Mammary epithelial cell (primary cell): ENCODE measurements at regions of chr21 and their contacts with region 1.

Region 1: GRCh38 chr21:41816220-41817165 is 49.6 kb upstream of the RIPK4 start:
- DNase-seq: peak; percentile 38
- H3K4me3 ChIP-seq: no peak overlapping the region
- H3K27ac ChIP-seq: no peak overlapping the region
- H3K4me1 ChIP-seq: peaks cover 6% of the 10 kb centered on the region
- H3K27me3 ChIP-seq: no peaks in the 10 kb centered on the region
- CTCF ChIP-seq: peak; percentile 60 to 62

Region 2: DNA sequence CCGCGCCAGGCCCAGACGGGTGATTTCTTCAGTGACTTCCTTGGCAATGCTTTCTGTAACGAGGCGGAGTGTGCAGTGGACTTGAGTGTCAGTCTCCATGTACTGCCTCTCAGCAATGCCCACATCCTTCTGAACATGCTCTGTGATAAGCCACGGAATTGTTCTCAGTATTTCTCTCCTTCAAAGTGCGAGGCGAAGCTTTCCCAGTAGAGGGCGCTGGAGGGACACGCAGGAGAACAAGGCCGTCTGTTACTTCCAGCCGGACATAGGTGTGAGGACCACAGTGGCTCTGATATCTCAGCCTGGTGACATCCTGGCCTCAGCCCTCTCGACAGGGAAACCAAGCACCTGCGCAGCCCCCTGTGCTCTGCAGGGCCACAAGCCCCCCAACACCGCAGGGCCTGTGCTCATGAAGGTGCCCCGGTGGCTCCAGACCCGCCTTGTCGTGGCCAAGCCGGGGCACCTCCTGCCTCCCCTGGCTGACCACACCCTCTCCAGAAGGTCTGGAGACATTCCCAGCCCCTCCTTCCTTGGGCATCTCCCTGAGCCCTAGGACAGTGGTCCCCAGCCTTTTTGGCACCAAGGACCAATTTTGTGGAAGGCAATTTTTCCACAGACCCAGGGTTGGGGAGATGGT is 694.6 kb before region 1 on chr21:
- CTCF ChIA-PET with region 1: no interaction called
- dilution Hi-C with region 1: no loop called
- in situ Hi-C with region 1: no loop called
- intact Hi-C with region 1: loop called (anchors 10 kb)
- DNase-seq: peak; percentile 70
- H3K4me3 ChIP-seq: no peak overlapping the region
- H3K27ac ChIP-seq: no peak overlapping the region
- H3K4me1 ChIP-seq: peaks cover 12% of the 10 kb centered on the region
- H3K27me3 ChIP-seq: no peaks in the 10 kb centered on the region
- CTCF ChIP-seq: peak; percentile 98 to 99

Region 3: GRCh38 chr21:41671859-41672532 is 144.5 kb before region 1 on chr21:
- CTCF ChIA-PET with region 1: interaction called, 13 read pairs
- dilution Hi-C with region 1: no loop called
- in situ Hi-C with region 1: no loop called
- intact Hi-C with region 1: no loop called
- DNase-seq: no peak
- H3K4me3 ChIP-seq: no peak overlapping the region
- H3K27ac ChIP-seq: no peak overlapping the region
- H3K4me1 ChIP-seq: peaks cover 23% of the 10 kb centered on the region
- H3K27me3 ChIP-seq: no peaks in the 10 kb centered on the region
- CTCF ChIP-seq: no peak

Region 4: GRCh38 chr21:41777951-41778874 is 38.3 kb before region 1 on chr21:
- CTCF ChIA-PET with region 1: interaction called, 22 read pairs
- dilution Hi-C with region 1: no loop called
- in situ Hi-C with region 1: no loop called
- intact Hi-C with region 1: loop called (anchors 2 kb)
- DNase-seq: peak; percentile 86
- H3K4me3 ChIP-seq: no peak overlapping the region
- H3K27ac ChIP-seq: peak overlapping the region; percentile 56
- H3K4me1 ChIP-seq: peaks cover 25% of the 10 kb centered on the region
- H3K27me3 ChIP-seq: no peaks in the 10 kb centered on the region
- CTCF ChIP-seq: peak; percentile 94

Region 5: GRCh38 chr21:42107881-42108553 is 291.5 kb after region 1 on chr21:
- CTCF ChIA-PET with region 1: no interaction called
- dilution Hi-C with region 1: no loop called
- in situ Hi-C with region 1: loop called in 1 of 2 experiments (anchors 25 kb)
- intact Hi-C with region 1: no loop called
- DNase-seq: peak; percentile 60
- H3K4me3 ChIP-seq: no peak overlapping the region
- H3K27ac ChIP-seq: no peak overlapping the region
- H3K4me1 ChIP-seq: no peaks in the 10 kb centered on the region
- H3K27me3 ChIP-seq: no peaks in the 10 kb centered on the region
- CTCF ChIP-seq: peak; percentile 89 to 96

Region 6: DNA sequence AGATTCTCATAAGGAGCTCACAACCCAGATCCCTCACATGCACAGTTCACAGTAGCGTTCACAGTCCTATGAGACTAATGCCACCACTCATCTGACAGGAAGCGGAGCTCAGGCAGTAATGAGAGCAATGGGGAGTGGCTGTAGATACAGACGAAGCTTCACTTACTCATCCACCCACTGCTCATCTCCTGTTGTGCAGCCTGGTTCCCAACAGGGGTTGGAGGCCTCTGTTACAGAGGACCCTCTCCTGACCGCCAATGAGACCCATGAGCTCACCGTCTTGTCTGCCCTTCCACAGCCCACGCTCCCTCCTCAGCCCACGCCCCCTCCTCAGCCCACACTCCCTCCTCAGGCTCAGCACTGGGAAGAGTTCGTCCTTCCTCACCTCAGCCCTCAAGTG is 640.0 kb after region 1 on chr21:
- CTCF ChIA-PET with region 1: no interaction called
- dilution Hi-C with region 1: no loop called
- in situ Hi-C with region 1: no loop called
- intact Hi-C with region 1: loop called (anchors 5 kb)
- DNase-seq: peak; percentile 10
- H3K4me3 ChIP-seq: no peak overlapping the region
- H3K27ac ChIP-seq: no peak overlapping the region
- H3K4me1 ChIP-seq: no peaks in the 10 kb centered on the region
- H3K27me3 ChIP-seq: no peaks in the 10 kb centered on the region
- CTCF ChIP-seq: no peak